Ovary (tissue), 10 donors: ENCODE measurements at regions of chr9 and their contacts with region 1.

Region 1: DNA sequence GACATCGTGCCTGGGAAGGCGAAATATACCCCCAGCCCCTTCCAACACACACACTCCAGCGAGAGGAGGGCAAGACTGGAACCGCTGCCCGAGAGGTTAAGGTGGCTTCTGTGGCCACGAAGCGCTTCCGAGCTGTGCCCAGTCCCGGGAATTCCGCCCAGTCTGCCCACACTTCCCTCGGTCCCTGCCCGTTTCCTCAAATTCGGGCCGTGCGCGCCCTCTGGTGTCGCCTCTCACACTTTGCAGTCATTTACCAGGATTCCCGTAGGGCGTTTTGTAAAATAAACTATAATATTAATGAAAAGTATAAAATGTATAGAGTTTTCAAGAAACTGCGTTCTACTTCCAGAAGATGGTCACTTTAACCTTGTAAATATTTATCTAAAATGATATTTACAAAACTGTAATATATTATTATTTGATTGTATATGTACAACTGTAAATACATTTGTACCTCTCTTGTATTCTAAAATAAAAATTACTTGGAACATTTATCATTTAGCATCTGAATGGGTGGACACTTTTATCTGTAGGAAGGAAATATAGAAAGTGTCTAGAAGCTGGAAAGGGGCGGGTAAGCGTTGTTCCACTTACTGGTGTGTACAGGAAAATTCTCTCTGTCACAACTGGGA is 11.0 kb upstream of the EXOSC2 start:
- DNase-seq: peak; percentile 61 to 81 (median 75)
- H3K4me3 ChIP-seq: peak overlapping the region; percentile 40
- H3K27ac ChIP-seq: no peak overlapping the region
- H3K4me1 ChIP-seq: peaks cover 4% of the 10 kb centered on the region
- H3K27me3 ChIP-seq: no peaks in the 10 kb centered on the region
- CTCF ChIP-seq: peak; percentile 70 to 74 (median 72)
- EP300 ChIP-seq: no peak
- POLR2A ChIP-seq: no peak

Region 2: GRCh38 chr9:129362287-129363000 is 1320.2 kb before region 1 on chr9:
- intact Hi-C with region 1: no loop called
- DNase-seq: no peak
- H3K4me3 ChIP-seq: no peak overlapping the region
- H3K27ac ChIP-seq: no peak overlapping the region
- H3K4me1 ChIP-seq: no peaks in the 10 kb centered on the region
- H3K27me3 ChIP-seq: no peaks in the 10 kb centered on the region
- CTCF ChIP-seq: no peak
- EP300 ChIP-seq: no peak
- POLR2A ChIP-seq: no peak

Region 3: DNA sequence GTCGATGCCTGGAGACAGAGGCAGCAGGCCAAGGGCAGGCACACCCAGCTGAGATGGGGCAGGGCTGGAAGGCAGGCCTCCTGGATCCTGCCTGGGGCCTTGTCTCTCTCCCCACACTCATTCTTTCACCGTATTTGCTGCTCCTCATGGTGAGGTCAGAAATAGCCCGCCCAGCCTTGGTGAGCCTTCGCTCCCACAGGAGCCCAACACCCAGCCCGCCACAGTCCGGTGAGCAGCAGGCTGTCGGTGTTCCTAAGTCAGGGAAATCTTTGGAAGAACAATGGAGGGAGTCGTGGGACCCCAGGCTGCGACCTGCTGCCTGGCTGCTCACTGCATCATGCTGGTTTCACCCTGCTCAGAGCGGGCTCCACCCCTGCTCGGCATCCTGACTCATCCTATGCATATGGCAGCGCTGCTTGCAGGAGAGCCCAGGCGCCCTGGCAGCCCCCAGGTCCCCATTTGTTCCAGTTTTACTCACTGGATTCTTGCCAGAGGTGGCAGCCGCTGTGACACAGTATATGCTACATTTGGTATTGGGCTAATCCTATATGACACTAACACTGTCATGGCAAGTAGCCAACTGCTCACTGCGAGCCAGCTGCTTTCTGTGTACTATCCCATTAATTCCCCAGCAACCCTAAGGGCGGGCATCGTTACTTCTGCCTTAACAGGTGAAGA is 563.6 kb before region 1 on chr9:
- intact Hi-C with region 1: loop called in 1 of 4 experiments (anchors 10 kb)
- DNase-seq: no peak
- H3K4me3 ChIP-seq: no peak overlapping the region
- H3K27ac ChIP-seq: no peak overlapping the region
- H3K4me1 ChIP-seq: no peaks in the 10 kb centered on the region
- H3K27me3 ChIP-seq: no peaks in the 10 kb centered on the region
- CTCF ChIP-seq: no peak
- EP300 ChIP-seq: no peak
- POLR2A ChIP-seq: no peak

Region 4: GRCh38 chr9:130461218-130461630 is 221.4 kb before region 1 on chr9:
- intact Hi-C with region 1: loop called (anchors 2 to 5 kb)
- DNase-seq: peak; percentile 46 to 79 (median 71)
- H3K4me3 ChIP-seq: no peak overlapping the region
- H3K27ac ChIP-seq: no peak overlapping the region
- H3K4me1 ChIP-seq: no peaks in the 10 kb centered on the region
- H3K27me3 ChIP-seq: no peaks in the 10 kb centered on the region
- CTCF ChIP-seq: peak; percentile 73 to 87 (median 84)
- EP300 ChIP-seq: no peak
- POLR2A ChIP-seq: no peak

Region 5: GRCh38 chr9:130578865-130579737 is 103.5 kb before region 1 on chr9 and contains the start of gene FUBP3:
- intact Hi-C with region 1: no loop called
- DNase-seq: peak; percentile 90 to 93 (median 92)
- H3K4me3 ChIP-seq: peak within 1 kb of the TSS; percentile 78
- H3K27ac ChIP-seq: peak within 1 kb of the TSS; percentile 30 to 84
- H3K4me1 ChIP-seq: peaks cover 12% of the 10 kb centered on the region
- H3K27me3 ChIP-seq: no peaks in the 10 kb centered on the region
- CTCF ChIP-seq: no peak
- EP300 ChIP-seq: no peak
- POLR2A ChIP-seq: peak; percentile 83
- total RNA-seq, gene FUBP3: 15.5 to 54.3 (median 48.2) TPM